ENCODE measurements at regions of chr21 and their contacts with region 1.

Region 1: DNA sequence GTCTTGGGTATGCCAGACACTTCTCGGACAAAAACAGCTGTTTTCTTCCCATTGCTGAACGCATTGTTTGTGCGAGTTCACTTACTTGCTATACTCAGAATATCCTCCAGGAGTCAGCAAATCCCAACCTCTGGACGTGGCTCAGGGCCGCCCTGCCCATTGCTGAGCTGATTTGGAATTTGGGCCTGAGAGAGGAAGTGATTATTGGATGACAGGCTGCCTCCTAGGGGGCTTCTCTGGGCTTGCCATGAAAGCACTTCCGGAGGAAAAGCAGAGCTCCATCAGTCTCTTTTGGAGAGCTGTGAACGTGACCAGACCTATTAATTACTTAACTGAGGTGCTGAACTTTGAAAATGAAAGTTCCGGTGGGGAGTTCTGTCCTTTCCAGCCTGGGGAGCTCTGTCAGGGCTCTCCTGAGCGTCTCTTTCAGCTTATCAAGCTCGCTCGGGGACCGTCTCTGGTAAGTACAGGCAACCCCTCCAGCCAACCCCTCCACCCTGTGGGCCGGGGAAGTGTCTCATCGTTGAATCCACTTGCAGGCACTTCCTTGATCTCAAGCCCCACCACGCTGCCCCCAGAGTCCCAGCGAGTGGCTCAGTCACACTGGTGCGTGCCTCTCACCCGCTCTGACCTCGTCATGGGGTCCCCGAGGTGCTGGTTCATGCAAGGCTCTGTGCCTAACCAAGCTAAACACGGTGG is 76.9 kb downstream of the CLIC6 start:
- DNase-seq: peak; percentile 61
- H3K4me3 ChIP-seq: no peak overlapping the region
- H3K27ac ChIP-seq: no peak overlapping the region
- H3K4me1 ChIP-seq: peaks cover 4% of the 10 kb centered on the region
- H3K27me3 ChIP-seq: no peaks in the 10 kb centered on the region
- CTCF ChIP-seq: peak; percentile 42 to 91 (median 86)
- POLR2A ChIP-seq: no peak

Region 2: DNA sequence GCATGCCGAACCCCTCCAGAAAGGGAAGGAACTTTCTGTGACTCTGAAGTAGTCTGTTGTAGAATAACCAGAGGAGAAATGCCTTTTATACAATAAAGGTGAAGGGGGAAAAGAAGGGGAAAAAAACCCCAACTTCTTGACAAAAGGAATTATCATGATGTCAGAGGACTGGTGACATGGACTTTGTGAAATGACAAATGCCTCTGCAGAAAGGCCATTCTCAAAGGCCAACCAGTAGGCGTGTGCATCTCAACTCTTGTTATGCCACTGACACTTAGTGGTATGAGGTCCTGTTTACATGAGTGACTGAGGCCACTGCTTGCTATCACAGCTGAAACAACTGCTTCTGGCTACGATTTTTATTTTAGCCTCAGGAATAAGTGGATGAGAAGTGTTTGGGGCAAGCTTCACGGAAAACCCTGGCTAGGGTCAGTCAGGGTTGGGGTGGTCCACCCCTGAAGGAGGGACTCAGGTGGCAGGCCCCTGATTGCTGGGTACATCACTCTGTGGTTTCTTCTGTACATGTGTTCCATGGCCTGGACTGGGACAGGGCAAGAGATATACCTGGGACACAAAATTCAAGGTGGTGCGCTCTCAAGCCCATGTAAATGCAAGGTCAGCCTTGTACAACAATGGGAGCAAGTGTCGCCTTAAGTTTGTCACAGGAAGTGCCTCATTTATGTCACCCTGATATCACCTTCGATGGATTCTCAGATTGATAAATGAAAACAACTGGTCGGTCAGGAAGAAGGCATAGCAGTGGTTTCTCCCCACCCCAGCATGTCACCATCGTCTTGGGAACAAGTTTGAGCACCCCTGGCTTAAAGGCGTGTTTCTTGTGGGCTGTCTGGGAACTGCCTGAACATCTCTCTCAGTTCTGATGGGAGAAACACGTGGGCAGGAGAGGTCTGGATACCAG is 291.0 kb after region 1 on chr21:
- intact Hi-C with region 1: no loop called
- DNase-seq: no peak
- H3K4me3 ChIP-seq: no peak overlapping the region
- H3K27ac ChIP-seq: no peak overlapping the region
- H3K4me1 ChIP-seq: no peaks in the 10 kb centered on the region
- H3K27me3 ChIP-seq: no peaks in the 10 kb centered on the region
- CTCF ChIP-seq: no peak
- POLR2A ChIP-seq: no peak

Region 3: GRCh38 chr21:35400233-35400957 is 654.7 kb after region 1 on chr21:
- intact Hi-C with region 1: loop called (anchors 2 kb)
- DNase-seq: peak; percentile 57
- H3K4me3 ChIP-seq: no peak overlapping the region
- H3K27ac ChIP-seq: no peak overlapping the region
- H3K4me1 ChIP-seq: no peaks in the 10 kb centered on the region
- H3K27me3 ChIP-seq: no peaks in the 10 kb centered on the region
- CTCF ChIP-seq: peak; percentile 34 to 78 (median 63)
- POLR2A ChIP-seq: no peak

Region 4: DNA sequence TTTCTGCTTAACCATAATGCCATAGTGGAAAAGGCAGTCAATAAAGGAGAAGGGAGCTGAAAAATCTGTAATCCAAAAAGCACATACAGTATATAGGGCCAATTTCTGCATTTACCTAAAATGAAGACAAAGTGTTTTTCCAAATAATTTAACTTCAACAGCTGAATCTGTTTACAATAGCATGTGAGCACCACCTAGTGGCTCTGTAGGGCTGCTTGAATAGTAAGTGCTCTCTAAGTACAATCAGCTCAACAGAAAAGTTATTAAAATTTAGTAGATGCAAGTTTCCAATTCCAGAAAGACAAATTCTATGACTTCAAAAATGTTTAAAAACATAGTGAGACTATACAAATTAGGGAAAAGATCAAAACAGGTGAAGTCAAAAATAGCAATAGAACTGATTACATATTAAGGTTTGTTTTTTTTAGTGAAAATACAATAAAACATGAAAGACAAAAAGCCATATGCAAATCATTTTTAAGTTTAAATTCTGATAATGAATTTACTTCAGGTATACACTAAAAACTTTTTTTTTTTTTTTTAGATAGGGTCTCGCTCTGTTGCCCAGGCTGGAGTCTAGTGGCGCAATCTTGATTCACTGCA is 1094.6 kb after region 1 on chr21:
- intact Hi-C with region 1: loop called (anchors 5 kb)
- DNase-seq: peak; percentile 73
- H3K4me3 ChIP-seq: no peak overlapping the region
- H3K27ac ChIP-seq: no peak overlapping the region
- H3K4me1 ChIP-seq: no peaks in the 10 kb centered on the region
- H3K27me3 ChIP-seq: no peaks in the 10 kb centered on the region
- CTCF ChIP-seq: peak in 3 of 4 experiments; percentile 54 to 87 (median 82)
- POLR2A ChIP-seq: no peak

Region 5: DNA sequence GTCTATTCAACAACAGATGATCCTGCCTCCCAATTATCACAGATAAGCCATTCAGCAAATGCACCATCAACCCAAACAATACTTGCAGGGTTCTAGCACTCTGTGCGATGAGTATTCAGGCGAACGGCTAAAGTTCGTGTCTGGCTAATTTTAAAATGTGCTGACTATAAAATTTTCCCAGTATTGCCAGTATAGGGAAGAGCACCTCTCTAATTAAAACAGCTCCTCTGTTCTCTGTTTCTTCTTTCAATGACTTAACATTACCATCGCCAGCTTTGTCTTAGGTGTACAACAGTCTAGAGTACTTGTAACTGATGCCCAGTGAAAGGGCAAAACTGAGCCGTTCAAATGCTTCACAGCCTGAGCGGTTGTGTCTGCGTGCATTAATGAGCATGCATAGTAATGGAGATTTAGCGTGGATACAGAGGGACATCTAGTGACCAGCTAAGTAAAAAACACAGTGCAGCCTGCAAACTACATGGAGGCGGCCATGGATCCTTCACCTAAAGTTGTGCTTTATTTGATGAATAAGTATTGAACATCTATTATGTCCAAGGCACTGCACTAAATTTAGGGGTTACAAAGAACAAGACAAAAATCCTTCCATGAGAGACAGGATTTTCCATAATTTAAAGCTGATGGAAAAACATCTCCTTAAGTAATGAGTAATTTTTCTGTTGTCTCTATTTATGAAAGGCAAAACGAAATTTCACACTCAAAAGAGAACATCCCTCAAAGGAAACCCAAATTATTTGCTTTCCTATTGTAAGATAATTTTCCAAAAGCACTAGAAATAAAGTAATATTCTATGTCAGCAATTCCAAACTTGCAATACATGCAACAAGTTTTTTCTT is 1194.6 kb after region 1 on chr21:
- intact Hi-C with region 1: loop called (anchors 5 kb)
- DNase-seq: peak; percentile 46
- H3K4me3 ChIP-seq: no peak overlapping the region
- H3K27ac ChIP-seq: no peak overlapping the region
- H3K4me1 ChIP-seq: no peaks in the 10 kb centered on the region
- H3K27me3 ChIP-seq: no peaks in the 10 kb centered on the region
- CTCF ChIP-seq: peak in 3 of 4 experiments; percentile 33 to 66 (median 61)
- POLR2A ChIP-seq: no peak

Region 6: GRCh38 chr21:36028127-36029069 is 1282.7 kb after region 1 on chr21:
- intact Hi-C with region 1: loop called (anchors 5 kb)
- DNase-seq: peak; percentile 71
- H3K4me3 ChIP-seq: no peak overlapping the region
- H3K27ac ChIP-seq: no peak overlapping the region
- H3K4me1 ChIP-seq: no peaks in the 10 kb centered on the region
- H3K27me3 ChIP-seq: no peaks in the 10 kb centered on the region
- CTCF ChIP-seq: peak; percentile 85 to 94 (median 94)
- POLR2A ChIP-seq: no peak